B cell (primary cell): ENCODE measurements at regions of chr6 and their contacts with region 1.

Region 1: GRCh38 chr6:31901953-31902643 is at the start of gene ZBTB12:
- DNase-seq: peak; percentile 93
- ATAC-seq: peak; percentile 64
- H3K4me3 ChIP-seq: peak within 1 kb of the TSS; percentile 27 to 82 (median 77)
- H3K4me3 Mint-ChIP-seq: peak within 1 kb of the TSS; percentile 94
- H3K27ac ChIP-seq: peak within 1 kb of the TSS; percentile 76 to 79
- H3K27ac Mint-ChIP-seq: peak within 1 kb of the TSS; percentile 93
- H3K4me1 ChIP-seq: peaks cover 13 to 23% of the 10 kb centered on the region in 2 donors
- H3K4me1 Mint-ChIP-seq: peaks cover 32% of the 10 kb centered on the region
- H3K27me3 ChIP-seq: no peaks in the 10 kb centered on the region
- H3K27me3 Mint-ChIP-seq: no peaks in the 10 kb centered on the region
- CTCF ChIP-seq: no peak
- total RNA-seq, gene ZBTB12: 8.1 and 8.9 TPM in 2 replicates

Region 2: DNA sequence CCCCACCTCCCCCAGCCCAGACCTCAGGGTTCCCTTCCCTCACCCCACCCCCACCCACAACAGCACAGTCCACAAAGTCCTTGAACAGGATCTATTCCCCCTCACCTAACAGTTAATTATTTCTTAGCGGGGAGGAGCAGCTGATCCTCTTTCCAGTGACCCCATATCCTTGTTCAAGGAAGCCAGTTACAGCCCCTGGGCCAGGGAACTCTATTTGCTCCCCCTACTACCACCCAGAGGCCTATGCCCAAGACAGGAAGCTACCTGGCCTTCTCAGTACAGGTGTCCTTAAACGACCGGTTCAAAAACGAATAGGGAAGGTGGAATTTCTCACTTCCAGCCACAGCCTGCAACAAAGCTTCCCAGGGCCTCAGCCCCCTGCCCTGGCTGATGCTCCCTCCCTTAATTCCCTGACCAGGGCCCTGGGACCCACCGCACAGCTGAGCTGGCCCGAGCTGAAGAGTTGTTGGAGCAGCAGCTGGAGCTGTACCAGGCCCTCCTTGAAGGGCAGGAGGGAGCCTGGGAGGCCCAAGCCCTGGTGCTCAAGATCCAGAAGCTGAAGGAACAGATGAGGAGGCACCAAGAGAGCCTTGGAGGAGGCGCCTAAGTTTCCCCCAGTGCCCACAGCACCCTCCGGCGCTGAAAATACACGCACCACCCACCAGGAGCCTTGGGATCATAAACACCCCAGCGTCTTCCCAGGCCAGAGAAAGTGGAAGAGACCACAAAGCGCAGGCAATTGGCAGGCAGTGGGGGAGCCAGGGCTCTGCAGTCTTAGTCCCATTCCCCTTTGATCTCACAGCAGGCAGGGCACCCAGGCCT is 372.6 kb before region 1 on chr6:
- CTCF ChIA-PET with region 1: no interaction called
- POLR2A ChIA-PET with region 1: no interaction called
- intact Hi-C with region 1: no loop called
- DNase-seq: no peak
- ATAC-seq: no peak
- H3K4me3 ChIP-seq: no peak overlapping the region
- H3K4me3 Mint-ChIP-seq: no peak overlapping the region
- H3K27ac ChIP-seq: no peak overlapping the region
- H3K27ac Mint-ChIP-seq: no peak overlapping the region
- H3K4me1 ChIP-seq: no peaks in the 10 kb centered on the region
- H3K4me1 Mint-ChIP-seq: peaks cover 12% of the 10 kb centered on the region
- H3K27me3 ChIP-seq: no peaks in the 10 kb centered on the region
- H3K27me3 Mint-ChIP-seq: no peaks in the 10 kb centered on the region
- CTCF ChIP-seq: no peak

Region 3: DNA sequence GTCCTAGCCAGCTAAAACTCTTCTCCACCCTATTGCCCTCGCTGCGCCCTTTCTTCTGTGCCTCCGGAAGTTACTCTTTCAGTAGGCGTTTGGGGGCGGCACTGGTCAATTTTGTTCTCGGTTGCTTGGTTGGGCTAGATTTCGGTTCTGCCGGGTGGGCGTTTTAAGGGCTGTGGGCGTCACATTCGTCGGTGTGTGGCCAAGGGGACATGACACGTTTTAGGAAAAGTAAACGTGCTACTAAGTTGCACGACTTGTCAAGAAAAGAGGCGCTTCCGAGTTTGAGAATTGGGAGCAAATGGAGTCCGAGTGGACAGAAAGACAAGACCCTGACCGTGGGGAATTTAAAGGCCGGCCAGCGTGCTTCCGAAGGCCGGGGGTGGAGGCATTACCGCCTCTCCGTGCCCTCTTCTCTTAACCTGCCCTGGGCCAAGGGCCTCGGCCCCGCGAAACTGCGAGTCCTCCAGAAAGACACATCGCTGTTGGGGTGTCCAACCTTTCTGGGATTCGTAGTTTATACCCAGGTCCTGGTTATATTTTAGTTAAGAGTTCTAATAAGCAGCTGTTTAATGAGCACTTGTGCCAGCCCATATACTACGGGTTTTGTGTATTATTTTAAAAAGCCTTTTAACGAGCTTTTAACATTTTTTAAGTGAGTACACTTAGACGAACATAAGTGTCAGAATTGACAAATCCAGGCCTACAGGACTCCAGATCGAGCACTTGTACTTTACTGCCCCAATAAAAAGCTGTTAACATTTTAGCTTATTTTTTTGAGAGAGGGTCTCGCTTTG is 249.0 kb before region 1 on chr6:
- CTCF ChIA-PET with region 1: no interaction called
- POLR2A ChIA-PET with region 1: interaction called, 4 read pairs
- intact Hi-C with region 1: loop called (anchors 2 kb)
- DNase-seq: no peak
- ATAC-seq: peak; percentile 69
- H3K4me3 ChIP-seq: peak overlapping the region; percentile 66 to 96 (median 86)
- H3K4me3 Mint-ChIP-seq: peak overlapping the region; percentile 98
- H3K27ac ChIP-seq: peak overlapping the region; percentile 97 to 98
- H3K27ac Mint-ChIP-seq: peak overlapping the region; percentile 100
- H3K4me1 ChIP-seq: peaks cover 22 to 29% of the 10 kb centered on the region in 2 donors
- H3K4me1 Mint-ChIP-seq: peaks cover 48% of the 10 kb centered on the region
- H3K27me3 ChIP-seq: no peaks in the 10 kb centered on the region
- H3K27me3 Mint-ChIP-seq: no peaks in the 10 kb centered on the region
- CTCF ChIP-seq: no peak

Region 4: GRCh38 chr6:31927242-31927862 is 25.3 kb after region 1 on chr6 and contains the start of gene C2:
- CTCF ChIA-PET with region 1: no interaction called
- POLR2A ChIA-PET with region 1: no interaction called
- intact Hi-C with region 1: no loop called
- DNase-seq: no peak
- ATAC-seq: no peak
- H3K4me3 ChIP-seq: no peak within 1 kb of the TSS
- H3K4me3 Mint-ChIP-seq: no peak within 1 kb of the TSS
- H3K27ac ChIP-seq: no peak within 1 kb of the TSS
- H3K27ac Mint-ChIP-seq: no peak within 1 kb of the TSS
- H3K4me1 ChIP-seq: no peaks in the 10 kb centered on the region
- H3K4me1 Mint-ChIP-seq: no peaks in the 10 kb centered on the region
- H3K27me3 ChIP-seq: peaks cover 0 to 8% (median 0%) of the 10 kb centered on the region in 4 experiments
- H3K27me3 Mint-ChIP-seq: peaks cover 7% of the 10 kb centered on the region
- CTCF ChIP-seq: no peak
- total RNA-seq, gene C2: 1.3 and 3.4 TPM in 2 replicates